Activated CD4-positive, alpha-beta T cell treated with anti-CD3 and anti-CD28 coated beads for 36 hours (primary cell): ENCODE measurements at regions of chr2 and their contacts with region 1.

Region 1: GRCh38 chr2:30336978-30337841 is 105.9 kb downstream of the LBH start:
- DNase-seq: peak; percentile 82
- ATAC-seq: peak; percentile 77
- H3K4me3 Mint-ChIP-seq: peak overlapping the region; percentile 56
- H3K27ac Mint-ChIP-seq: peak overlapping the region; percentile 98
- H3K4me1 Mint-ChIP-seq: peaks cover 81% of the 10 kb centered on the region
- H3K27me3 Mint-ChIP-seq: no peaks in the 10 kb centered on the region

Region 2: DNA sequence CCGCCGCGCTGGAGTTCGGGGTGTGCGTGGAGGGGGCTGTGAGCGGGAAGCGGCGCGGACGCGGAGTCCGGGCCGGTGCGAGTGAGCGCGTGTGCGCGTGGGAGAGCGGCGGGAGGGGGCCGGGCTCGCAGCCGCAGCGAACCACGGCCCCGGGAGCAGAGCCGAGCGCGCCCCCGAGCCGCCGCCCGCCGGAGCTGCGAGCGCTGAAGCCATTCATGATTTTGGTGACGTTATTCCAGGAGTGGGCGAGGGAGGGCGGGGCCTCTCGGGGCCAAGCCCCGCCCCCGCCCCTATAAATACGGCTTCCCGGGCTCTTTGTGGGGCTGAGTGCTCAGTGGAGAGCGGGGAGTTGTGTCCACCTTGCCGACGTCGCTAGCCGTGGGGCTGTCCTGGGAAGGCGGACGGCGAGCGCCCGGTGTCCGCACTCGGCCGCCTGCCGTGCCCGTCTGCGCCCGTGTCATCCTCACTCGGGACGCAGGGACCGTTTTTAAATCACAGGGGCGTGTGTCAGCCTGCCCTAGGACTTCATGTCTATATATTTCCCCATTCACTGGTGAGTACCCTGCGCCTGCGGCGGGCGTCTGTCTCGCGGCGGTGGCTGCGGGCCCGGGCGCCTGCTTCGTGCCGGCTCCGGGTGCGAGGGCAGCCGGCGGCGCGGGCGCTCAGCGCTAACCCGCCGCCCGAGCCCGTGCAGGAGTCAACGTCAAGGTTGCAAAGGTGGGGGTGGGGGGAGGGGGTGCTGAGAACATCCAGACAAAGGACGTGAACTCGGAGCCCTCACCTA is 105.8 kb before region 1 on chr2 and contains the start of gene LBH:
- CTCF ChIA-PET with region 1: interaction called, 3 read pairs
- POLR2A ChIA-PET with region 1: interaction called, 11 read pairs
- intact Hi-C with region 1: loop called (anchors 1 to 5 kb)
- DNase-seq: peak; percentile 94
- ATAC-seq: peak; percentile 41
- H3K4me3 Mint-ChIP-seq: peak within 1 kb of the TSS; percentile 76
- H3K27ac Mint-ChIP-seq: peak within 1 kb of the TSS; percentile 93
- H3K4me1 Mint-ChIP-seq: peaks cover 65% of the 10 kb centered on the region
- H3K27me3 Mint-ChIP-seq: peaks cover 10% of the 10 kb centered on the region
- total RNA-seq, gene LBH: 89.6 to 108 TPM

Region 3: DNA sequence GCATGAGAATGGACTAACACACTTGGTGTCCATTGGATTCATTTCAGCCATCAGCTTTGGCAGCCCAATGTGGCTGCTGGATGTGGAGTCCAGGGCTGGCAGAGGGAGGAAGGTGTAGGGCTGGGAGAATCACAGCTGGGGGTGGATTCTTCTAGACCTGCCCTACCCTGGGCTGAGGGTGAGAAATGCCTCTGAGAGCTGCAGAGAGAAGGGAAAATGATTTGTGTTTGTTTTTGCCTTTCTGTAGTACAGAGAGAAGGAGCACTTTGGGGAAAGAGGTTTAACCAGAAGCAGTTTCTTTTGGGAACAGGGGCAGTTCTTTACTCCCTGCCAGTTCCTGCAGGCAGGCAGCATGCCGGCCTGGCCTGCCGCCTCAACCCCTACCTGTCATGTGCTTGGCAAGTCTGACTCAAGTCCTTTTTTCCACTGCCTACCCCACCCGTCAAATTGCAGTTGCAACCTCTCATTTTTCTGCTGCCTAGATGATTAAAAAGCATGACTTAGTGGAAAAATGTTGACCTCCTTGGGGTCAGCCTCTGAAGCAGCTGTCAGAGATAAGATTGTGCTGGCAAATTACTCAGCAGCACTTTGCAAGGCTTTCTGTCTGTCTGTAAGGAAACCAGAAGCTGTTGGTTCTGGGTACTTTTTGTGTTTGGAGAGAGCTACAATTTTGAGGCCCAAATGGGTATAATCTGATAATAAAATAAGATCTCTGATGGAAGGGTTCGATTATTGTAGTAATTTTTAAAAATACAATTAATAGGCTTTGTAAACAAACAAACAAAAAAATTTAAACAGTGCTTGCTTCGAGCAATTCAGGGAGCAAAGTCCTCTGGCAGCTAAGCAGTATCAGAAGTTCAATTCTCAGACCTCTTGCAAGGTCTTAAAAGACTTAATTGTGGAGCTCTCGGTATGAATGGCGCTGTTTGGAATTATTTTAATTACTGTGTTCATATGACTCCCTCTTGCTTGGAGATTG is 84.2 kb before region 1 on chr2:
- CTCF ChIA-PET with region 1: no interaction called
- POLR2A ChIA-PET with region 1: interaction called, 4 read pairs
- intact Hi-C with region 1: loop called in 1 of 2 experiments (anchors 5 kb)
- DNase-seq: peak; percentile 87
- ATAC-seq: peak; percentile 77
- H3K4me3 Mint-ChIP-seq: peak overlapping the region; percentile 42
- H3K27ac Mint-ChIP-seq: peak overlapping the region; percentile 88
- H3K4me1 Mint-ChIP-seq: peaks cover 96% of the 10 kb centered on the region
- H3K27me3 Mint-ChIP-seq: no peaks in the 10 kb centered on the region

Region 4: GRCh38 chr2:30273261-30273861 is 63.8 kb before region 1 on chr2:
- CTCF ChIA-PET with region 1: no interaction called
- POLR2A ChIA-PET with region 1: no interaction called
- intact Hi-C with region 1: loop called in 1 of 2 experiments (anchors 1 kb)
- DNase-seq: peak; percentile 73
- ATAC-seq: peak; percentile 70
- H3K4me3 Mint-ChIP-seq: peak overlapping the region; percentile 46
- H3K27ac Mint-ChIP-seq: peak overlapping the region; percentile 92
- H3K4me1 Mint-ChIP-seq: peaks cover 79% of the 10 kb centered on the region
- H3K27me3 Mint-ChIP-seq: no peaks in the 10 kb centered on the region

Region 5: DNA sequence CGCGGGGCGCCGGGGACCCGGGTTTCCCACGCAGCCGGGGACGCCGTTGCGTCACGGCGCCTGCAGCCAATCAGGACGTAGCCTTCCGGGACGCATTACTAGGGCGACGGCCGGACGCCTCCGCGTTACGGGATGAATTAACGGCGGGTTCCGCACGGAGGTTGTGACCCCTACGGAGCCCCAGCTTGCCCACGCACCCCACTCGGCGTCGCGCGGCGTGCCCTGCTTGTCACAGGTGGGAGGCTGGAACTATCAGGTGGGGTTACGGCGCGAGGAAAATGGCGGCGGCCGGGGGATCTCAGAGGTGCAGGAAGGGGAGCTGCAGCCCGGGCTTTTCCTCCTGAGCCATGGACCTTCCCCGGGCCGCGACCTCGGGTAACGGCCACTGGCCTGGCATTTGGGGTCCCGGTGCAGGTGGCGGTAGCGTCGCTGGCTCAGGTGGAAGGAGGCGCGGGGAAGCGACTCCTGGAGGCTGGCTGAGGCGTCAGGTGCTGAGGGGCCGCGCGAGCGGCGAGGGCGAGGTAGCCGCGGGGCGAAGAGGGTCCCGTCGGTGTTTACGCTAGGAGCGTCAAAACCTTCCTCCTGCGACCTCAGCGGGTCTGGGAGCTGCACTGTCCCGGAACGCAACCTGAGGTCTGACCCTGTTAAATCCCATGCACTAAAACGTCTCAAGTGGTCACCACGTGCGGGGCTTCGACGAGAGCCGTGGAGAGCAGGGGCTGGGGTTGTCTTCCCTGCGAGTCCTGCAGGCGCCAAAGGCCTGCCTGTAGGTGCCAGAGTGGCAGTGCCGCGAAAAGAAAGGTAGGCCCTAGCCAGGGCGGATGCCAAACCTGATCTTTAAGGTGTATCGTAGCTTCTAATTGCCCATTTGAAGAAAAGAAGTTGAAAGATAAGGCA is 110.2 kb after region 1 on chr2 and contains the start of gene LCLAT1:
- CTCF ChIA-PET with region 1: interaction called, 3 read pairs
- POLR2A ChIA-PET with region 1: interaction called, 3 read pairs
- intact Hi-C with region 1: loop called (anchors 2 to 5 kb)
- DNase-seq: peak; percentile 91
- ATAC-seq: peak; percentile 80
- H3K4me3 Mint-ChIP-seq: peak within 1 kb of the TSS; percentile 87
- H3K27ac Mint-ChIP-seq: peak within 1 kb of the TSS; percentile 96
- H3K4me1 Mint-ChIP-seq: peaks cover 32% of the 10 kb centered on the region
- H3K27me3 Mint-ChIP-seq: no peaks in the 10 kb centered on the region
- total RNA-seq, gene LCLAT1: 18.5 to 21.7 TPM

Region 6: DNA sequence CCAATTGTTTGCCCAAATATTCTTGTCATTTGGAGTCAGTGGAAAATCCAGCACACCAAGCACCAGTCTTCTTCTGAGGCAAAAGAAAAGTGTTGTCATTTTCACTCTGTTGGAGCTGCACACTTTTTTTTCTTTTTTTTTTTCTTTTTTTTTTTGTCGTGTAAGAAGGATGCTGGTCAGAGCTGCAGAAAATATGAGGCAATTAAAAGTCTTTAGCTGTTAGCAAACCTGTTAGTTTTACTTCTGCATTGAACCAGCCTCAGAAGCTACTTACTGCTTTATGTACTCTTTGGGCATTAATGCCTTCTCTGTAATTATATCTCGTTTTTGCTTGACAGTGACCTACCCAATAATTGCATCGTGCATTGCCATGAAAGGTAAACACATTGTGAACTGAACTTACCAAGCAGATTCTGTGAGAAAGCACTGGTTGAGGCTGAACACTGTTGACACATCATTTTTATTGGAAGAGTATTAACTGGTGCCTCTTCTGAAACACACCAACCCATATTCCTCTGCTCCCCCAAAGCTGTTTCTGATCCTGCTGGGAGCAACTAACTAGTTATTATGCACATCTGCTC is 304.6 kb after region 1 on chr2:
- CTCF ChIA-PET with region 1: no interaction called
- POLR2A ChIA-PET with region 1: no interaction called
- intact Hi-C with region 1: no loop called
- DNase-seq: no peak
- ATAC-seq: no peak
- H3K4me3 Mint-ChIP-seq: no peak overlapping the region
- H3K27ac Mint-ChIP-seq: no peak overlapping the region
- H3K4me1 Mint-ChIP-seq: no peaks in the 10 kb centered on the region
- H3K27me3 Mint-ChIP-seq: no peaks in the 10 kb centered on the region